Naive thymus-derived CD4-positive, alpha-beta T cell (primary cell): ENCODE measurements at regions of chr3 and their contacts with region 1.

Region 1: DNA sequence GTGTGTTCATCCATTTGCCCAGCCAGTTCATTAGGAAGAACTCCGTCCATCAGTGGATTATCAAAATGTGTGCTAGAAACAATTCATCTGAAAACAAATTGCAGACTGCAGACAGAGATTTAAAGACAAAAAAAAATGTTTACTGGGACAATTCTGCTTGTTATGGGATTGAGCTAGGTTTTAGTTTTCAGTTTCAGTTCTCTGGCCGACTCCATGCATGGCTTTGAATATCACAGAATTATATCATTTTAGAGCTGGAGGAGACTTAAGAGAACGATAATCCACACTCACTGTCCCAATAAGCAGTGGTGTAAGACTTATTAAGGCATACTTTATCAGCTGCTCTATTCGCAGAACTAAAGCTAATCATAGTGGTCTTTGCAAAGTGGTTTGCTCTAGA is 51.1 kb downstream of the TFG start:
- DNase-seq: no peak
- ATAC-seq: no peak
- H3K4me3 ChIP-seq: no peak overlapping the region
- H3K4me3 Mint-ChIP-seq: no peak overlapping the region
- H3K27ac ChIP-seq: no peak overlapping the region
- H3K27ac Mint-ChIP-seq: peak overlapping the region in 2 of 9 donors; percentile 8 to 11
- H3K4me1 ChIP-seq: no peaks in the 10 kb centered on the region
- H3K4me1 Mint-ChIP-seq: peaks cover 0 to 15% (median 0%) of the 10 kb centered on the region in 7 donors
- H3K27me3 ChIP-seq: no peaks in the 10 kb centered on the region
- H3K27me3 Mint-ChIP-seq: peaks cover 0 to 3% (median 0%) of the 10 kb centered on the region in 5 donors

Region 2: GRCh38 chr3:100650651-100651611 is 109.4 kb before region 1 on chr3:
- CTCF ChIA-PET with region 1: no interaction called
- POLR2A ChIA-PET with region 1: no interaction called
- intact Hi-C with region 1: no loop called
- DNase-seq: peak in 4 of 9 donors; percentile 8 to 52 (median 24)
- ATAC-seq: peak; percentile 77
- H3K4me3 ChIP-seq: no peak overlapping the region
- H3K4me3 Mint-ChIP-seq: peak overlapping the region in 8 of 10 donors; percentile 23 to 75 (median 51)
- H3K27ac ChIP-seq: no peak overlapping the region
- H3K27ac Mint-ChIP-seq: peak overlapping the region in 8 of 9 donors; percentile 16 to 90 (median 53)
- H3K4me1 ChIP-seq: no peaks in the 10 kb centered on the region
- H3K4me1 Mint-ChIP-seq: peaks cover 3 to 13% (median 9%) of the 10 kb centered on the region in 7 donors
- H3K27me3 ChIP-seq: peaks cover 0 to 3% of the 10 kb centered on the region in 2 donors
- H3K27me3 Mint-ChIP-seq: peaks cover 0 to 4% (median 0%) of the 10 kb centered on the region in 5 donors

Region 3: DNA sequence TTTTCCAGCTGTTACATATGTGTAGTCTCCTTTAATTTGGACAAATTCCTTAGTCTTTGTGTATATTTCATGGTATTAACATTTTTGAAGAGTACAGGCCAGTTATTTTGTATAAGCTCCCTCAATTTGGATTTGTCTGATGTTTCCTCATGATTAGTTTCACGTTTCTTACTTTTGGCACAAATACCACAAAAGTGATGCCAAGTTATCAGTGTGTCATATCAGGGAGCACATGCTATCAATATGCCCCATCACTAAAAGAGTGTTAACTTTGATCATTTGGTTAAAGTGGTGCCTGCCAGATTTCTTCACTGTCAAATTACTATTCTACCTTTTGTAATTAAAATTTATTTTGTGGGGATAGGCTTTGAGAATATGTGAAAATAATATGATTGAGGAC is 828.2 kb after region 1 on chr3:
- CTCF ChIA-PET with region 1: no interaction called
- POLR2A ChIA-PET with region 1: interaction called, 11 read pairs
- intact Hi-C with region 1: no loop called
- DNase-seq: no peak
- ATAC-seq: no peak
- H3K4me3 ChIP-seq: no peak overlapping the region
- H3K4me3 Mint-ChIP-seq: no peak overlapping the region
- H3K27ac ChIP-seq: no peak overlapping the region
- H3K27ac Mint-ChIP-seq: peak overlapping the region in 5 of 9 donors; percentile 5 to 76 (median 66)
- H3K4me1 ChIP-seq: no peaks in the 10 kb centered on the region
- H3K4me1 Mint-ChIP-seq: peaks cover 15 to 55% (median 40%) of the 10 kb centered on the region in 7 donors
- H3K27me3 ChIP-seq: no peaks in the 10 kb centered on the region
- H3K27me3 Mint-ChIP-seq: no peaks in the 10 kb centered on the region